Cardiac septum (tissue), 1 donor: ENCODE measurements at regions of chr5 and their contacts with region 1.

Region 1: GRCh38 chr5:59380350-59380951 is 513.1 kb downstream of the PDE4D start:
- DNase-seq: no peak

Region 2: DNA sequence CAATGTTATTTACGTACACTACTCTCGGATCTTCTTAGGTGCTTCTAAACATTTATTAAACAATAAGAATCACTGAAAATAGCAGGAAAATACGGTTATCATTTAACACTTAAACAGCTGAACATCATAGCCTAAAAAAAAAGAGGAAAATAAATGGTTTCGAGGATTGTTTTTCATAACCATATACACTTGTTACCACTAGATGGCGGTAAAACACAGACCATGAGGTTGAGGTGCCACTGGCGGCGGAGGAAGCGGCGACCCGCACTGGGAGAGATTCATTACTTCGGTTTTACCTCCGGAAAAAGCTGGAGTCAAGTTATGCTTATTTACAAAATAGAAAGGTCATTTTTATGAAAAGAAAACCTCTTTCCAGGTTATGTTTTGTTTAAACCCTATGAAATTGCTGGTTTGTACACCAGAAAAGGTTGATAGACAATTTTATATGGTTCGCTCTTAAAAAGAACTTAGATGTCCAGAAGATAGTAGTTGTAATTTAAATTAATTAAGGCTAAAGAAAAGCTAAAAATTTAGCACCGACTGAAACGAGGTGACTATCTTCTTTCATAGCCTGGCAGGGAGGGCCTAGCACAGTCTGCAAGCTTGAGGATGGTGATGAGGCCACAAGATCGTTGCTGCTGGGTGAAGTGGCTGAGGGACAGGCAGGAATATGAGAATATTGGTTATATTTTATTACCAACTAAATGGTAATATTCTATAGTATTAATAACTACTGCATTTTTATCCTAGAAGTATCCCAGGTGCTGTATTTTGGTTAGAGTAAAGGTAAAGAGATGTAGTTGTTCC is 191.8 kb before region 1 on chr5:
- intact Hi-C with region 1: loop called (anchors 2 kb)
- DNase-seq: peak; percentile 83